ENCODE measurements at regions of chr12 and their contacts with region 1.

Region 1: GRCh38 chr12:118061011-118061875 is at the start of gene WSB2:
- DNase-seq: peak; percentile 73
- ATAC-seq: peak; percentile 8
- H3K4me3 Mint-ChIP-seq: peak within 1 kb of the TSS; percentile 88
- H3K27ac Mint-ChIP-seq: peak within 1 kb of the TSS; percentile 97
- H3K4me1 Mint-ChIP-seq: peaks cover 47% of the 10 kb centered on the region
- H3K27me3 Mint-ChIP-seq: peaks cover 2% of the 10 kb centered on the region
- total RNA-seq, gene WSB2: 57.7 to 58.2 TPM

Region 2: GRCh38 chr12:117190210-117190781 is 870.9 kb before region 1 on chr12 and contains the start of gene FBXO21:
- CTCF ChIA-PET with region 1: no interaction called
- POLR2A ChIA-PET with region 1: no interaction called
- intact Hi-C with region 1: loop called in 1 of 2 experiments (anchors 5 kb)
- DNase-seq: peak; percentile 96
- ATAC-seq: peak; percentile 97
- H3K4me3 Mint-ChIP-seq: peak within 1 kb of the TSS; percentile 95
- H3K27ac Mint-ChIP-seq: peak within 1 kb of the TSS; percentile 90
- H3K4me1 Mint-ChIP-seq: peaks cover 27% of the 10 kb centered on the region
- H3K27me3 Mint-ChIP-seq: no peaks in the 10 kb centered on the region
- total RNA-seq, gene FBXO21: 22.8 to 28.2 TPM

Region 3: GRCh38 chr12:117968826-117969659 is 92.2 kb before region 1 on chr12 and contains the start of gene KSR2:
- CTCF ChIA-PET with region 1: interaction called, 3 read pairs
- POLR2A ChIA-PET with region 1: interaction called, 8 read pairs
- intact Hi-C with region 1: loop called in 1 of 2 experiments (anchors 2 kb)
- DNase-seq: peak; percentile 81
- ATAC-seq: peak; percentile 88
- H3K4me3 Mint-ChIP-seq: peak within 1 kb of the TSS; percentile 74
- H3K27ac Mint-ChIP-seq: peak within 1 kb of the TSS; percentile 26
- H3K4me1 Mint-ChIP-seq: peaks cover 9% of the 10 kb centered on the region
- H3K27me3 Mint-ChIP-seq: peaks cover 57% of the 10 kb centered on the region
- total RNA-seq, gene KSR2: 0.14 to 0.16 TPM

Region 4: DNA sequence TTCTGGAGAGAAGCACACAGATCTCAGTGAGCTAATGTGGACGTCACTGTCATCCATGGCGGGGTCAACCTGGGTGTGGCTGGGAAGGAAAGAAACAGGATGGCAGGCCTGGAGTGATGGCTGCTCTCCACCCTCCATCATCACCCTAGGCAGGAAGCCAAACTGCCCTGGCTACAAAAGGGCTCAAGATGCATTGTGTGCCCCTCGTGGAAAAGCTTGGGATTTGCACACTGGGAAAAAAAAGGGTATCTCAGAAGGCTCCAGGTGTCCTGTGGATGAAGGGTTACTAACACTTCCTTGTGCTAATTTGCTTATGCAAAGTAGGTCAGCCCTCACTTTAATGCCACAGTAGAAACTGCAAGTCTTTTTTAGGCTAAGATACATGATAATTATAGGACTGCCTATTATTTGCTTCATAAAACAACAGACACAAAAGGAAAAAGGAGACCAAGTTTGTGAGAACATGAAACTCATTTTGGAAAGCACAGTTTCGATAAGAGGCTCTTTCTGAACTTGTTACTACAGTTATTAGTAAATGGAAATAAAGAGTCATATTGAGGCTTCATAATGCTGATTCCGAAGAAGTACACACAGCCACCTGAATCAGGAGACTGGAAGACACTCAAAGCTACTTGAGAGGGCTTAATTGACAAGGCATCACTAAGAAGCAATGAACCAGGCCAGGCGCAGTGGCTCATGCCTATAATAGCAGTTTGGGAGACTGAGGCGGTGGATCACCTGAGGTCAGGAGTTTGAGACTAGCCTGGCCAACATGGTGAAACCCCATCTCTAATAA is 25.8 kb before region 1 on chr12:
- CTCF ChIA-PET with region 1: interaction called, 48 read pairs
- POLR2A ChIA-PET with region 1: interaction called, 8 read pairs
- intact Hi-C with region 1: loop called in 1 of 2 experiments (anchors 2 kb)
- DNase-seq: peak; percentile 60
- ATAC-seq: peak; percentile 89
- H3K4me3 Mint-ChIP-seq: peak overlapping the region; percentile 22
- H3K27ac Mint-ChIP-seq: peak overlapping the region; percentile 89
- H3K4me1 Mint-ChIP-seq: peaks cover 55% of the 10 kb centered on the region
- H3K27me3 Mint-ChIP-seq: no peaks in the 10 kb centered on the region

Measured in activated CD4-positive, alpha-beta T cell treated with anti-CD3 and anti-CD28 coated beads for 36 hours (primary cell).